Caco-2 (cell line): ENCODE measurements at regions of chr20 and their contacts with region 1.

Region 1: GRCh38 chr20:31951530-31952453 is at the start of gene PDRG1:
- DNase-seq: peak; percentile 98 to 100
- H3K4me3 ChIP-seq: peak within 1 kb of the TSS; percentile 61
- H3K4me3 Mint-ChIP-seq: peak within 1 kb of the TSS; percentile 95
- H3K27ac Mint-ChIP-seq: peak within 1 kb of the TSS; percentile 96
- H3K4me1 ChIP-seq: peaks cover 6% of the 10 kb centered on the region; the same call in 1 of the 2 replicates
- H3K4me1 Mint-ChIP-seq: peaks cover 11% of the 10 kb centered on the region
- H3K27me3 ChIP-seq: no peaks in the 10 kb centered on the region
- H3K27me3 Mint-ChIP-seq: peaks cover 5% of the 10 kb centered on the region
- CTCF ChIP-seq: peak; percentile 98 to 100
- total RNA-seq, gene PDRG1: 55.7 and 56.8 TPM in 2 replicates

Region 2: DNA sequence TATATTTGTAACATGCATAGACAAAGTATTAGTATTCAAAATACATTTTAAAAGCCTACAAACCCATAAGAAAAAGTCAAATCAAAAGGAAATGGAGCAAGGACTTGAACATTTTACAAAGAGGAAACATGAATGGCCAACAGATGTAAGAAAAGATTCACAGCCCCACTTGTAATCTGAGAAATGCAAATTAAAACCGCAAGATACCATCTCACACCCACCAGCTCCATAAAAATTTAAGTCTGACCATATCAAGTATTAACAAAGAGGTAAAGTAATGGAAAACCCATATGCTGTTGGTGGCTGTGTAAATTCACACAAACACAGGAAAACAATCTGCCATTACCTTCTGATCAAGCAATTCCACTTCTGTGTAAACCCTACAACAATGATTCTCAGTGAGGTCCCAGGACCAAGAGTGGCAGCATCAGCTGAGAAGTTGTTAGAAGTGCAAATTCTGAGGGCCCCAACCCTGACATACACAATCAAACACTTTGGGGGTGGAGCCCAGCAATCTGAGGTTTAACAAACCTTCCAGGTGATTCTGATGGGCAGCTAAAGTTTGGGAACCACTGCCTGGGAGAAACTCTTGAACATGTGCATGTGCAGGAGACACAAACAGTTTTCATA is 260.0 kb before region 1 on chr20:
- CTCF ChIA-PET with region 1: no interaction called
- POLR2A ChIA-PET with region 1: no interaction called
- intact Hi-C with region 1: no loop called
- DNase-seq: no peak
- H3K4me3 ChIP-seq: no peak overlapping the region
- H3K4me3 Mint-ChIP-seq: peak overlapping the region; percentile 5
- H3K27ac Mint-ChIP-seq: peak overlapping the region; percentile 27
- H3K4me1 ChIP-seq: peaks cover 62% of the 10 kb centered on the region
- H3K4me1 Mint-ChIP-seq: peaks cover 72% of the 10 kb centered on the region
- H3K27me3 ChIP-seq: no peaks in the 10 kb centered on the region
- H3K27me3 Mint-ChIP-seq: no peaks in the 10 kb centered on the region
- CTCF ChIP-seq: no peak

Region 3: DNA sequence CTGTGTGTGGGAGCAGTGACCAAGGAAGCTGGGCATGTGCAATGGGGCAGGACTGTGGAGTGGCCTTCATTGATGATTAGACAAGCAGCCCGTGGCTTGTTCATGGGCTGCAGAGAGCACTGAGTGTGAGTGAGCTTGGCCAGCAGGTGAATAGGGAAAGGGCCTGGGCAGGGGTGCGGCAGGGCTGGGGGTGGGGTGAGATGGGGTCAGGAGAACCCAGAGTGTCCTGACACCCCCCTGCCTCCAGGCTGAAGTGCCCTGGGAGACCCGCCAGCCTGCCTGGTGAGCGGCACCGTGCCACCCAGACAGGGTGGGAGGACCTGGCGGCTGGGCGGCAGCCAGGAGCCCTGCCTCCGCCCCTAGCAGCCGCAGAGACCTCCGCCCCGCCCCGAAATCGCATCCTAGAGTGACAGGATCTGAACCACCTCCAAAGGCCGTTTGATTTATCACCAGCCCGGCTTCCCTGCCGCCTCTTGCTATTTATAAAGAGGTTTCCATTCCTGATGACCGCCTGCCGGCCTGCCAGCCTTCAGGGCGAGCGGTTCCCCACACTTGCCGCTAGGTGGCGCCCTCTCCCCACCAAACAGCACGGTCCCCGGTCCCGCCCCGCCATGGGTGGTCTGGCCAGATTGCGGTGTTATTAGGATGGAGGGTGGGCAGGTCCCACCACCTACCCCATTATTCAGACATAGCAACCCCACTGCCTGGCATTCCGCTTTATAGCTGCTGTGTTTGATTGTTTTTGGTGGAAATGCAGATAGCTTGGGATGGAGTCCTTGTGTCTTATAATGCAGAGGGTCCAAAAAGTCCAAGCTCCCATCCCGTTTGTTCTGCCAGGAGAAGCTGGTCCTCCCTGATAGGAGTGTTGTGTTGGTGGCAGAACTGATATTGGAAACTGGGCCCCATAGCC is 129.1 kb before region 1 on chr20:
- CTCF ChIA-PET with region 1: interaction called, 32 read pairs
- POLR2A ChIA-PET with region 1: no interaction called
- intact Hi-C with region 1: loop called (anchors 1 kb)
- DNase-seq: peak; percentile 80 to 92
- H3K4me3 ChIP-seq: no peak overlapping the region
- H3K4me3 Mint-ChIP-seq: no peak overlapping the region
- H3K27ac Mint-ChIP-seq: no peak overlapping the region
- H3K4me1 ChIP-seq: no peaks in the 10 kb centered on the region
- H3K4me1 Mint-ChIP-seq: no peaks in the 10 kb centered on the region
- H3K27me3 ChIP-seq: no peaks in the 10 kb centered on the region
- H3K27me3 Mint-ChIP-seq: no peaks in the 10 kb centered on the region
- CTCF ChIP-seq: peak; percentile 100

Region 4: GRCh38 chr20:31851240-31851955 is 100.4 kb before region 1 on chr20:
- CTCF ChIA-PET with region 1: interaction called, 110 read pairs
- POLR2A ChIA-PET with region 1: interaction called, 3 read pairs
- intact Hi-C with region 1: loop called (anchors 1 kb)
- DNase-seq: no peak
- H3K4me3 ChIP-seq: no peak overlapping the region
- H3K4me3 Mint-ChIP-seq: no peak overlapping the region
- H3K27ac Mint-ChIP-seq: no peak overlapping the region
- H3K4me1 ChIP-seq: peaks cover 7% of the 10 kb centered on the region; the same call in 1 of the 2 replicates
- H3K4me1 Mint-ChIP-seq: no peaks in the 10 kb centered on the region
- H3K27me3 ChIP-seq: peaks cover 11% of the 10 kb centered on the region
- H3K27me3 Mint-ChIP-seq: peaks cover 18% of the 10 kb centered on the region
- CTCF ChIP-seq: no peak

Region 5: GRCh38 chr20:31861346-31862156 is 90.2 kb before region 1 on chr20:
- CTCF ChIA-PET with region 1: interaction called, 31 read pairs
- POLR2A ChIA-PET with region 1: interaction called, 3 read pairs
- intact Hi-C with region 1: loop called (anchors 2 kb)
- DNase-seq: peak; percentile 91
- H3K4me3 ChIP-seq: peak overlapping the region; percentile 75
- H3K4me3 Mint-ChIP-seq: peak overlapping the region; percentile 78
- H3K27ac Mint-ChIP-seq: peak overlapping the region; percentile 5
- H3K4me1 ChIP-seq: peaks cover 16% of the 10 kb centered on the region
- H3K4me1 Mint-ChIP-seq: peaks cover 8% of the 10 kb centered on the region
- H3K27me3 ChIP-seq: no peaks in the 10 kb centered on the region
- H3K27me3 Mint-ChIP-seq: peaks cover 7% of the 10 kb centered on the region
- CTCF ChIP-seq: no peak

Region 6: GRCh38 chr20:31934968-31935764 is 16.6 kb before region 1 on chr20:
- CTCF ChIA-PET with region 1: interaction called, 12 read pairs
- POLR2A ChIA-PET with region 1: no interaction called
- intact Hi-C with region 1: no loop called
- DNase-seq: no peak
- H3K4me3 ChIP-seq: no peak overlapping the region
- H3K4me3 Mint-ChIP-seq: no peak overlapping the region
- H3K27ac Mint-ChIP-seq: no peak overlapping the region
- H3K4me1 ChIP-seq: no peaks in the 10 kb centered on the region
- H3K4me1 Mint-ChIP-seq: no peaks in the 10 kb centered on the region
- H3K27me3 ChIP-seq: no peaks in the 10 kb centered on the region
- H3K27me3 Mint-ChIP-seq: peaks cover 8% of the 10 kb centered on the region
- CTCF ChIP-seq: peak; percentile 8 to 26

Region 7: DNA sequence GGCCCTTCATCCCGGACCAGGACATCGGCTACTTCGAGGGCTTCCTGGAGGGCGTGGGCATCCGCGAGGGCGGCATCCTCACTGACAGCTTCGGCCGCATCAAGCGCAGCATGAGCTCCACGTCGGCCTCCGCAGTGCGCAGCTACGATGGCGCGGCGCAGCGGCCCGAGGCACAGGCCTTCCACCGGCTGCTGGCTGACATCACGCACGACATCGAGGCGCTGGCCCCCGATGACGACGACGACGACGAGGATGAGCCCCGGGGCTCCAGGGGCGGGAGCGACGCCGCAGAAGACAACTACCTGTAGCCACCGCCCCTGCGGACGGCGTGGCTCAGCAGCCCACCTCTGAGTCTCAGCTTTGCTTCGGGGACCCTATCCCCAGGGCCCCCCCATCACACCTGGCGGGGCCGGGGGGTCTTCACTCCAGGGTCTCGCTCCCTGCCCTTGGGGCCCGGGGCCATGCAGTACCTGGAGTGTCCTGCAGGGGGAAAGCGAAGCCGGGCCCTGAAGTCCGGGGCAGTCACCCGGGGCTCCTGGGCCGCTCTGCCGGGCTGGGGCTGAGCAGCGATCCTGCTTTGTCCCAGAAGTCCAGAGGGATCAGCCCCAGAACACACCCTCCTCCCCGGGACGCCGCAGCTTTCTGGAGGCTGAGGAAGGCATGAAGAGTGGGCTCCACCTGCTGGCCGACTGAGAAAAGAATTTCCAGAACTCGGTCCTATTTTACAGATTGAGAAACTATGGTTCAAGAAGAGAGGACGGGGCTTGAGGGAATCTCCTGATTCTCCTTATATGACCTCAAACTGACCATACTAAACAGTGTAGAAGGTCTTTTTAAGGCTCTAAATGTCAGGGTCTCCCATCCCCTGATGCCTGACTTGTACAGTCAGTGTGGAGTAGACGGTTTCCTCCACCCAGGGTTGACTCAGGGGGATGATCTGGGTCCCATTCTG is 79.5 kb after region 1 on chr20:
- CTCF ChIA-PET with region 1: interaction called, 15 read pairs
- POLR2A ChIA-PET with region 1: no interaction called
- intact Hi-C with region 1: loop called (anchors 1 kb)
- DNase-seq: peak; percentile 97 to 98
- H3K4me3 ChIP-seq: peak overlapping the region; percentile 31
- H3K4me3 Mint-ChIP-seq: peak overlapping the region; percentile 54
- H3K27ac Mint-ChIP-seq: no peak overlapping the region
- H3K4me1 ChIP-seq: peaks cover 6% of the 10 kb centered on the region
- H3K4me1 Mint-ChIP-seq: no peaks in the 10 kb centered on the region
- H3K27me3 ChIP-seq: peaks cover 7% of the 10 kb centered on the region
- H3K27me3 Mint-ChIP-seq: peaks cover 27% of the 10 kb centered on the region
- CTCF ChIP-seq: peak; percentile 24 to 100